Activated CD4-positive, alpha-beta memory T cell treated with anti-CD3 and anti-CD28 coated beads for 36 hours (primary cell): ENCODE measurements at regions of chr22 and their contacts with region 1.

Region 1: DNA sequence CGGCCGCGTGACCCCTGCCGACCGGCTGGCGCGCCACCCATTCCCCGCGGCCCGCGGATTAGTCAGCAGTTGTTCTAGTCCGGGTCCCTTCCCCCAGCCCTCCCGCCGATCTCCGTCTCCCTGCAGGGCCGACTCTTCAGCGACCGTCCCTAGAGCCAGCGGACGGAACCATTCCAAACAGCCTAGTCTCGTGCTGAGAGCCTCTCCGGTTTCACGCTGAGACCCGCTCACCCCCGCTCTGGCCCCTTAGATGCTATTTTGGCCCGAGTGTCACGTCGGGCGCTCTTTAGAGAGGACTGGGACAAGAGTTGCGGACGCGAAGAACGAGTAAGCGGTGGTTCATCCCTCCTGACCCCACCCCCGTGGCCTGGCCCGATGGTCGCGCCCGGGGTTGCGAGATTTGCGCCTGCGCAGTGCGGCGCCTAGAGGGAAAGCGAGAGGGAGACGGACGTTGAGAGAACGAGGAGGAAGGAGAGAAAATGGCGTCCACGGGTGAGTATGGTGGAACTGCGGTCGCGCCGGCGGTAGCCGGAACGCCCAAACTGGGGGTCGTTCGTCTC is at the starts of genes EWSR1 and RHBDD3:
- DNase-seq: peak; percentile 97
- H3K4me3 Mint-ChIP-seq: peak within 1 kb of the TSS; percentile 90
- H3K27ac Mint-ChIP-seq: peak within 1 kb of the TSS; percentile 99
- H3K4me1 Mint-ChIP-seq: peaks cover 46% of the 10 kb centered on the region
- H3K27me3 Mint-ChIP-seq: no peaks in the 10 kb centered on the region
- total RNA-seq, gene EWSR1: 286 to 302 TPM
- total RNA-seq, gene RHBDD3: 20.2 to 21.1 TPM

Region 2: GRCh38 chr22:29251981-29252911 is 15.7 kb before region 1 on chr22:
- CTCF ChIA-PET with region 1: no interaction called
- POLR2A ChIA-PET with region 1: no interaction called
- intact Hi-C with region 1: no loop called
- DNase-seq: no peak
- H3K4me3 Mint-ChIP-seq: no peak overlapping the region
- H3K27ac Mint-ChIP-seq: no peak overlapping the region
- H3K4me1 Mint-ChIP-seq: no peaks in the 10 kb centered on the region
- H3K27me3 Mint-ChIP-seq: peaks cover 2% of the 10 kb centered on the region

Region 3: DNA sequence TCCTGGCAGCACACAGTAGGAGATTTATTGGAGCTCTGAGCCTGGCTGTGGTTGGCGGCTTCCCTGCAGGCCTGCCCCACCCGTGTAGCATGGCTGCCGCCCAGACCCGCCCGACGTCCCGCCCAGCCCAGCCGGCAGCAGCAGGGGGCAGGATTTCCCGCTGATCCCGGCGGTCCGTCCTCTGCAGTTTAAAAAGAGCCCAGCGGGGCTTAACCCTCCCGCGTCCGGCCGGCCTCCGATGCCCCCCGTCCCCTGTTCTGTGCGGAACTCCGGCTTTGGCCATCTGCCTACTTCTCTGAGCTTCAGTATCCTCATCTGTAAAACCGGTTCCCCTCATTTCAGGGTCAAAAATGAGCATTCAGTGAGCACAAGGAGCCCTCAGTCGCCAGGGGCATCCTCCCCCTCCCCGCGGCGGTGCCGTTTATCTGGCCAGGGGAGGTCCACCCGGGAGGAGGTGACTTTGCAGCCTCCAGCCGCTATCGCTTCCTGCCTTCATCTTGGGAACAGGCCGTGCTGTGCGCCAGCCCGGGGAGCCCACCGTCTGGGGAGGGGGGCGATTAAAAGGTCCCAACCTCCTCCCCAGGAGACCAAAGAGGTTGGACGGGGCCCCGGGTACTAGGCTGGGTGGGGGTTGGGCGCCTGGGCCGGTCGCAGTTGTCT is 38.4 kb after region 1 on chr22 and contains the start of gene GAS2L1:
- CTCF ChIA-PET with region 1: no interaction called
- POLR2A ChIA-PET with region 1: interaction called, 4 read pairs
- intact Hi-C with region 1: loop called (anchors 5 kb)
- DNase-seq: peak; percentile 71
- H3K4me3 Mint-ChIP-seq: peak within 1 kb of the TSS; percentile 66
- H3K27ac Mint-ChIP-seq: no peak within 1 kb of the TSS
- H3K4me1 Mint-ChIP-seq: peaks cover 18% of the 10 kb centered on the region
- H3K27me3 Mint-ChIP-seq: peaks cover 12% of the 10 kb centered on the region
- total RNA-seq, gene GAS2L1: 1.3 to 1.4 TPM

Region 4: DNA sequence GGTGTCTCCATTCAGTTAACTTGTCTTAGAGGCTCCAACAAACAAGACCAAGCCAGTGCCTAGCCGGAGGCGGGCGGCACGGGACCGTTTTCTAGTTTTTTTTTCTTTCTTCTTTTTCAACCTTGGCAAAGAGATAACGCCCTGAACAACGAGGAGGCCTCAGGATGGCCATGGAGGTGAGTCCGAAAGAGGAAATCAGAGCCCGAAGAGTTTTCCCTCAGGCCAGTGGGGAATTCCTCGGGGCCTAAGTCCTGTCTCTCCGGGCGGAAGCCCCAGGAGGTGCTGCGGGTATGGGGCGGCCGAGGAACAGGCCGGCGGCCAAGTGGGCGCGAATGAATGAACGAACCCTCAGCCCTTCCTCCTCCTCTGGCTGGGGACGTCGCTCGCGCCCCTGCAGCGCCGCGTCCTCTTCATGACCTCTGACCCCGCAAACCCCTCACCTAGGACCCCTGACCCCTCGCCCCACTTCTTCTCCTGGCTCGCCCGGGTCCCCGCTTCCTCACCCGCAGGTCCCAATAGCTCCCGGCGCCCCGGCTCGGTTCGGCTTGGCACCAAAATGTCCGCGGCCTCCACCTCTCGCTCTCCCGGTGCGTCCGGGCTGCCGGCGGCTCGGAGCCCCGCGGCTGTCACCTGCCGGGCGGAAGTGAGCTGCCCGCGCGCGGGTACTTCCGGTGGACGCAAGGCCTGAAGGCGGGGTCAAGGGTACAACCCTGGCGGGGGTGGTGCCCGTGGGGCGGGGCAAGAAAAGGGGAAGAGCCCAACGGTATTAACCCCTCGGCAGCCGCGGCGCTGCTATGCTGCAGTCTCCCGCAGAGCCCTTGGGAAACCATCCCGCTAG is 120.2 kb after region 1 on chr22 and contains the start of gene AP1B1:
- CTCF ChIA-PET with region 1: no interaction called
- POLR2A ChIA-PET with region 1: no interaction called
- intact Hi-C with region 1: loop called (anchors 5 kb)
- DNase-seq: peak; percentile 98
- H3K4me3 Mint-ChIP-seq: peak within 1 kb of the TSS; percentile 90
- H3K27ac Mint-ChIP-seq: peak within 1 kb of the TSS; percentile 93
- H3K4me1 Mint-ChIP-seq: peaks cover 33% of the 10 kb centered on the region
- H3K27me3 Mint-ChIP-seq: no peaks in the 10 kb centered on the region
- total RNA-seq, gene AP1B1: 59.9 to 65.2 TPM